Mammary epithelial cell (primary cell): ENCODE measurements at regions of chr17 and their contacts with region 1.

Region 1: DNA sequence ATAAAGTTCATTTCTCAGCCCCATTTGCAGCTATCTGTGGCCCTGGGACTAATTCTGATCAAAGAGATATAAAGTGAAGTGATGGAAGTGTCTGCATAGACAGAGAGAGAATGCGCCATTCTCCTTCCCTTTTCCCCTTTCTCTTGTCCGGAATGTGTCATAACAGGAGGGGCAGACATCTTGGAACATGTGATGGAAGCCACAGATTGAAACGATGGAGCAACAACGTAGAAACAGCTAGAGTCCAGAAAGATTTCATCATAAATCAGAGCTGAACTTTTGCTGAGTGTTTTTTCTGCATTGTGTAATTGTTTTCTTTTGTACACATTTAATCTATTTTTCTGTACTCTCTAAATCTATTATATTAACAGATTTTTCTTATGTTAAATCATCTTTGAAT is 11.3 kb downstream of the ASGR1 start:
- DNase-seq: no peak
- H3K4me3 ChIP-seq: no peak overlapping the region
- H3K27ac ChIP-seq: no peak overlapping the region
- H3K4me1 ChIP-seq: no peaks in the 10 kb centered on the region
- H3K27me3 ChIP-seq: no peaks in the 10 kb centered on the region
- CTCF ChIP-seq: no peak

Region 2: GRCh38 chr17:6940186-6940649 is 227.6 kb before region 1 on chr17:
- CTCF ChIA-PET with region 1: no interaction called
- dilution Hi-C with region 1: no loop called
- in situ Hi-C with region 1: no loop called
- intact Hi-C with region 1: no loop called
- DNase-seq: no peak
- H3K4me3 ChIP-seq: no peak overlapping the region
- H3K27ac ChIP-seq: no peak overlapping the region
- H3K4me1 ChIP-seq: no peaks in the 10 kb centered on the region
- H3K27me3 ChIP-seq: no peaks in the 10 kb centered on the region
- CTCF ChIP-seq: no peak

Region 3: DNA sequence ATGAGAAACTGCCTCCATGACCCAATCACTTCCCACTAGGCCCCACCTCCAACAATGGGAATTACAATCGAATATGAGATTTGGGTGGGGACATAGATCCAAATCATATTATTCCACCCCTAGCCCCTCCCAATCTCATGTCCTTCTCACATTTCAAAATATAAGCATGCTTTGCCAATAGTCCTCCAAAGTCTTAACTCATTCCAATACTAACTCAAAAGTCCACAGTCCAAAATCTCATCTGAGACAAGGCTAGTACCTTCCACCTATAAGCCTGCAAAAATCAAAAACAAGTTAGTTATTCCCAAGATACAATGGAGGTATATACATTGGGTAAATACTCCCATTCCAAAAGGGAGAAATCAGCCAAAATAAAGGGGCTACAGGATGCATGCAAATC is 100.6 kb before region 1 on chr17:
- CTCF ChIA-PET with region 1: no interaction called
- dilution Hi-C with region 1: loop called (anchors 5 kb)
- in situ Hi-C with region 1: no loop called
- intact Hi-C with region 1: no loop called
- DNase-seq: no peak
- H3K4me3 ChIP-seq: no peak overlapping the region
- H3K27ac ChIP-seq: no peak overlapping the region
- H3K4me1 ChIP-seq: peaks cover 4% of the 10 kb centered on the region
- H3K27me3 ChIP-seq: no peaks in the 10 kb centered on the region
- CTCF ChIP-seq: no peak

Region 4: DNA sequence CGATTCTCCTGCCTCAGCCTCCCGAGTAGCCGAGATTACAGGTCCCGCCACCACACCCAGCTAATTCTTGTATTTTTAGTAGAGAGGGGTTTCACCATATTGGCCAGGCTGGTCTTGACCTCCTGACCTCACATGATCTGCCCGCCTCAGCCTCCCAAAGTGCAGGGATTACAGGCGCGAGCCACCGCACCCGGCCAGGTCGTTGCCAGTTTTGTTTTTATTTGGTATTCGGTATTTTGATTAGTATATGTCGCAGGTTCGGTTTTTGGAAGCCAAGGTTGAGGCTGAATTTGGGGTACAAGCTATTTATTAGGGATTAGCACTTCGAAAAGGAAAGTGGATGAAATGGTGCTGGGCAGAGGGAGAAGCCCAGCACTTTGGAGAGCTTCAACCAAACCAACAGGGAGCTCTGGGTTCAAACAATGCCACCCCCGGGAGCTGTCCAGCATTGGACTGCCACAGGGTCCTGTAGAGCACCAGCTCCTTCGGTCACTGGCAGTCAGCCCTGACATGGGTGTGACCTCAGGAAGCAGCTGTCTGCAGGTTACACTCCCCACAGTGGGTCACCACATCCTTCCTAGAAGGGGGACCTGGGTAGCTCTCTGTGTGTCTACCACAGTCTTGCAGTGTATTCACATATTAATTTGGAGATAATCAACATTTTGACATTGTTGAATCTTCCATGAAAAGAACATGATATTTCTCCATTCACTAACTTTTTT is 86.3 kb before region 1 on chr17:
- CTCF ChIA-PET with region 1: no interaction called
- dilution Hi-C with region 1: no loop called
- in situ Hi-C with region 1: no loop called
- intact Hi-C with region 1: no loop called
- DNase-seq: no peak
- H3K4me3 ChIP-seq: no peak overlapping the region
- H3K27ac ChIP-seq: no peak overlapping the region
- H3K4me1 ChIP-seq: peaks cover 7% of the 10 kb centered on the region
- H3K27me3 ChIP-seq: no peaks in the 10 kb centered on the region
- CTCF ChIP-seq: no peak

Region 5: GRCh38 chr17:7101531-7101930 is 66.3 kb before region 1 on chr17:
- CTCF ChIA-PET with region 1: no interaction called
- dilution Hi-C with region 1: loop called (anchors 5 kb)
- in situ Hi-C with region 1: no loop called
- intact Hi-C with region 1: no loop called
- DNase-seq: no peak
- H3K4me3 ChIP-seq: no peak overlapping the region
- H3K27ac ChIP-seq: no peak overlapping the region
- H3K4me1 ChIP-seq: no peaks in the 10 kb centered on the region
- H3K27me3 ChIP-seq: peaks cover 6% of the 10 kb centered on the region
- CTCF ChIP-seq: no peak

Region 6: DNA sequence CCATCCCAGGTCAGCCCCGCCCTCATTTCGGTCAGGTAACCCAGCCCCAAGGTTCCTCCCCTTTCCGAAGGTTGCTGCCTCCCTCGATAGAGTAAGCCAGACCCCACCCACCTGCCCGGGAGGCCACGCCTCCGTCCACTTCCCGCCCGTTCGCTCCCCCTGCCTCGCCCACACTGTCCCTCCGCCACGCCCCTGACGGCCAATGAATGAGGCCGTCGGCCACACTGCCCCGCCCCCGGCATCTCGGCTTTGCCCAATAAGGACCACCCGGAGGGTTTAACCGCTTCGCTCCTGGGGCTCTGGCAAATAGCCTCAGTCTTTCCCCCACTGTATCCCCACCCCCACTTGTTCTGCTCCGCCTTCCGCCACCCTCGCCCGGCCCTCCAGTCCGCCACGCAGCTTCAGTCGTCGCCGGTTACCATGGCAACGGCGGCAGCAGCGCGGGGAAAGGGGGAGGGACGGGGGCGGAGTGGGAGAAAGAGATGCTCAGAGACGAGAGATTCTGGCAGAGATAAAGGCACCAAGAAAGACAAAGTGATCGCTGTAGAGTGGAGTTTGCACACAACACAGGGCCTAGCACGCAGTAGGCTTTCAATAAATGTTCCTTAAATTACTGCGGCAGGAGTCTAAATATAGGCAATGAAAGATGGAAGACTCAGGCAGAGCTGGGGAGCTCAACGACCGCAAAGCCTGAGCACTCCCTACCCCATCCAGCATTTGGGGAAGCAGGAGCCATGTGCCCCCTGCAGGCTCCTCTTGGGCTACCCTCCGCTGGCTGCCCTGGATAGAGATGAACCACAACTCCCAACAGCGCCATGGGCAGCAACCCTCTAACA is 46.7 kb after region 1 on chr17:
- CTCF ChIA-PET with region 1: no interaction called
- dilution Hi-C with region 1: loop called (anchors 5 kb)
- in situ Hi-C with region 1: no loop called
- intact Hi-C with region 1: no loop called
- DNase-seq: peak; percentile 95
- H3K4me3 ChIP-seq: peak overlapping the region; percentile 31 to 58 (median 39)
- H3K27ac ChIP-seq: peak overlapping the region; percentile 66
- H3K4me1 ChIP-seq: peaks cover 10% of the 10 kb centered on the region
- H3K27me3 ChIP-seq: no peaks in the 10 kb centered on the region
- CTCF ChIP-seq: peak; percentile 45 to 74